ENCODE measurements at regions of chr19 and their contacts with region 1.

Region 1: DNA sequence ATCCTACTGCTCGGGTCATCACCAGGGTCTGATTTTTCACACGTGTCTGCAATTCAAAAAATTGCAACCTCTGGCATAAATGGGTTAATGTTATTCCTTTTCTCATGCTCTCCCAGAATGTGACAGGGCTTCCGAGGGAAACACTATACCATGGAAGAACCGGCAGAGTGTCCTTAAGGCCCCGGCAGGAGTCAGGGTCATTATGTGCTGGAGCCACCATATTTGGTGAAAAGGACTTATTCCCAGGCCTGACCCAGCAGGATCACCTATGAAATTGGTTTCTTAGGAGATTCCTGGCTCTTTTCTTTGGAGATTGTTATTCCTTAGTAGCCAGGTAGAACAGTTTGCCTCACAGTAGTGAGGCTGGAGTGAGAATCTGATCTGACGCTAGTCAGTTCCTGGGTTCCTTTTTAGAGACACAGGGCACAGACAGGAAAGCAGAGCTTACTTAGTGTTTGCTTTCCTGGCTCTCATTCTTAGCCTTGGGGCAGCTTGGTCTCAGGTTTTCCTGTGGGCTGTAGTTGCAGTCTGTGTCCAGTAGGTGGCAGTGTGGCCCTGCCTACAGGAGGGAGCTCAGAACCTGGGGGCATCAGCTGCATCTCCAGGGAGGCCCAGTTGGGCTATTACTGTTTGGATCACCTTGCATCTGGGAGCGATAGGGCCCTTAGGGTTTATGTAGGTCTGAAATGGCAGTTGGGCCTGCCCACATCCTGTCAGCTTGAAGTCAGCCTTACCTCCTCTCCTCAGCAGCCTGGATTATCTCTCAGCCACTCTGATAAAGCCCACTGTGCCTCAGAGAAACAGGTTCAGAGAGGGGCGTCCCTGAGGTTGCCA is 12.4 kb downstream of the SNRNP70 start:
- DNase-seq: peak; percentile 66 to 90
- H3K4me3 ChIP-seq: no peak overlapping the region
- H3K27ac ChIP-seq: peak overlapping the region; percentile 21; the same call in 1 of the 2 replicates
- H3K4me1 ChIP-seq: no peaks in the 10 kb centered on the region
- H3K27me3 ChIP-seq: no peaks in the 10 kb centered on the region
- CTCF ChIP-seq: peak; percentile 95 to 99 (median 98)
- EP300 ChIP-seq: no peak
- POLR2A ChIP-seq: peak in 1 of 2 experiments; percentile 54; a peak in 2 of 3 replicates
- RAD21 ChIP-seq: peak; percentile 88 to 95

Region 2: DNA sequence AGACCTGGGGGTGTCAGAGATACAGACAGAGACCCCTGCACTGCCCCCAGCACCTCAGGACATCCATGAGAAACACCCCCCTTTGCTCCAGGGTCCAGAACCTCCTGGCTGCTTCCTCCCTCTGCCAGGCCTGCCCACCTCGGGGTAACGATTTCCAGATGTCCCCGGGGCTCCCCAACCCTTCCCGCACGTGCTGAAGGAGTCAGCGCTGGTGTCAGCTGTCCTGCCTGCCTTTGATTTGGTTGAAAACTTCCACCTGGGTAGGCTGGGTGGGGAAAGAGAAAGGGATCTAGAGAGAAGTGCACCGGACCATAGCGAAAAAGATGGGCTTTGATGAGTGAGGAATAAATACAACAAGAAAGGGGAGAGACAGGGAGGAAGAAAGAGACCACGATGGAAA is 38.6 kb before region 1 on chr19:
- CTCF ChIA-PET with region 1: no interaction called
- POLR2A ChIA-PET with region 1: no interaction called
- DNase-seq: no peak
- H3K4me3 ChIP-seq: no peak overlapping the region
- H3K27ac ChIP-seq: no peak overlapping the region
- H3K4me1 ChIP-seq: peaks cover 0 to 14% (median 12%) of the 10 kb centered on the region in 4 experiments; a peak in 6 of 7 replicates
- H3K27me3 ChIP-seq: peaks cover 10 to 48% (median 44%) of the 10 kb centered on the region in 4 experiments
- CTCF ChIP-seq: no peak
- EP300 ChIP-seq: no peak
- POLR2A ChIP-seq: no peak
- RAD21 ChIP-seq: no peak

Region 3: DNA sequence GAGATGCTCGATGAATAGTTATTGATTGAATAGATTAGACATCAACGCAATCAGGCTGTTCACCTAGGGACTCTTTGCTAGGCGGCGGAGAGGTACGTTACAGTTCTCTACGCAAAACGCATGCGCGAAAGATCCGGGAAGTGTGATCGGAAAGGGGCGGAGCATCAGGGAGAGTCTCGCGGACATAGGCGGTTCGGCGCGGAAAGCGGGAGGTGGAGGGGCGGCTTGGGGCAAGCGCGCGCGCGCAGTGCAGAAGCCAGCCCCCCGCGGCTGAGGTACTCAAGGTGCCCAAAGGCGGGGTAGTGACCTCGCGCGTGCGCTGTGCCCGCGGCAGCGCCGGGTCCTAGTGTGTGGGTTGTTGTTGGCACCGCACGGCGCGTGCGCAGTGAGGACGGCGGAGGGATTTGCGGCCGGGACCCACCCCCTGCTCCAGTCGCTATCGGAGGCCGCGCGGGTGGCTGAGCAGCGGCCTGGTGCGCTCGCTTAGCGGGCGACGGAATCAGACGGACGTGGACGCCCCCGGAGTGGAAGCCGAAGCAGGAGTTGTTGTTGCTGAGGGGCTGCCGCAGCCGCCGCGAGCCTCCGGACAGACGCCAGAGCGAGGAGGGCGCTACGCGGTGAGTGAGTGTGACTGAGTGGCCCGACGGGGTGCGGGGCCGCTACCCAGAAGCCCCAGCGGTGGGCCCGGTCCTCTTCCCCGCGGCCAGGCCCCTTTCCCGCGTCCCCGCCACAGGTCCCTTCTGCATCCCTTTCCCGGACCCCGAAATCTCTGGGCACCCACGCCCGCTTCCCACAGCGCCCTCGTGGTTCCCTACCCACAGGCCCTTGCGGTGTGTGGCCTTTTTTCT is 12.4 kb before region 1 on chr19 and contains the start of gene SNRNP70:
- CTCF ChIA-PET with region 1: interaction called, 16 read pairs
- POLR2A ChIA-PET with region 1: interaction called, 10 read pairs
- DNase-seq: peak; percentile 98 to 99
- H3K4me3 ChIP-seq: peak within 1 kb of the TSS; percentile 84 to 97 (median 90)
- H3K27ac ChIP-seq: peak within 1 kb of the TSS; percentile 94
- H3K4me1 ChIP-seq: peaks cover 4 to 6% (median 5%) of the 10 kb centered on the region in 4 experiments
- H3K27me3 ChIP-seq: peaks cover 0 to 3% (median 0%) of the 10 kb centered on the region in 4 experiments; a peak in 1 of 7 replicates
- CTCF ChIP-seq: 0 out of 4 replicates have a peak, but pooled peaks of 1 of the 3 experiments have one; percentile 3
- EP300 ChIP-seq: no peak; a peak in 1 of 3 replicates
- POLR2A ChIP-seq: peak; percentile 97 to 98
- RAD21 ChIP-seq: no peak
- total RNA-seq, gene SNRNP70: 231 and 244 TPM in 2 replicates

Region 4: DNA sequence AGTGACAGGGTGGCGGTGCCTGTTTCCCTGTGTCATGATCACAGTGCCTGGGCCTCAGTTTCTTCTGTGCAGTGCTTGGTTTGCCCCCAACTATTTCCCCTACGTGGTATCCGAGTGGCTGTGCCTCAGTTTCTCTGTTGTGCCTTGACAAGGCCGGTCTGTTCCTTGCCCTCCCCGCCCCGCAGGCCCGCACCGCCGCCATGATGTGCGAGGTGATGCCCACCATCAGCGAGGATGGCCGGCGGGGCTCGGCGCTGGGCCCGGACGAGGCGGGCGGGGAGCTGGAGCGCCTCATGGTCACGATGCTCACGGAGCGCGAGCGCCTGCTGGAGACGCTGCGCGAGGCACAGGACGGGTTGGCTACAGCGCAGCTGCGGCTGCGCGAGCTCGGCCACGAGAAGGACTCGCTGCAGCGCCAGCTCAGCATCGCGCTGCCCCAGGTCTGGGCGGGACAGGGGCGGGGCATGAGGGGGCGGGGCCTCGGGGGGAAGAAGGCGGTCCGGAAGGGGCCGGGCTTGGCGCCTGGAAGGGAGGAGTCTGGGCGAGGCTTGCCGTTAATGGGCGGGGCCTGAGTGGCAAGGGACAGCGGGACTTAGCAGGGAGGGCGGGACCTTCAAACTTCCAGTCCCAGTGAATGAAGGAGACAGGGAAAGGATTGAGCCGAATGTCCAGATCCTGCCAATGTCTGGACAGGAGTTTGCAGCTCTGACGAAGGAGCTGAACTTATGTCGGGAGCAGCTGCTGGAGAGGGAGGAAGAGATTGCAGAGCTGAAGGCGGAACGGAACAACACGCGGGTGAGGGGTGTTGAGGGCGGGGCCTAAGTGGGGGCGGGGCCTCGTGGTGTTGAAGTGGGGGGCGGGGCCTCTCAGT is 30.2 kb after region 1 on chr19:
- CTCF ChIA-PET with region 1: interaction called, 14 read pairs
- POLR2A ChIA-PET with region 1: no interaction called
- DNase-seq: peak in 1 of 2 experiments; percentile 97
- H3K4me3 ChIP-seq: peak overlapping the region; percentile 56 to 74 (median 66)
- H3K27ac ChIP-seq: peak overlapping the region; percentile 48; the same call in 1 of the 2 replicates
- H3K4me1 ChIP-seq: peaks cover 4 to 19% (median 8%) of the 10 kb centered on the region in 4 experiments
- H3K27me3 ChIP-seq: no peaks in the 10 kb centered on the region; a peak in 2 of 7 replicates
- CTCF ChIP-seq: peak in 1 of 3 experiments; percentile 1; a peak in 1 of 4 replicates
- EP300 ChIP-seq: no peak
- POLR2A ChIP-seq: peak in 1 of 2 experiments; percentile 69; a peak in 2 of 3 replicates
- RAD21 ChIP-seq: no peak

Region 5: DNA sequence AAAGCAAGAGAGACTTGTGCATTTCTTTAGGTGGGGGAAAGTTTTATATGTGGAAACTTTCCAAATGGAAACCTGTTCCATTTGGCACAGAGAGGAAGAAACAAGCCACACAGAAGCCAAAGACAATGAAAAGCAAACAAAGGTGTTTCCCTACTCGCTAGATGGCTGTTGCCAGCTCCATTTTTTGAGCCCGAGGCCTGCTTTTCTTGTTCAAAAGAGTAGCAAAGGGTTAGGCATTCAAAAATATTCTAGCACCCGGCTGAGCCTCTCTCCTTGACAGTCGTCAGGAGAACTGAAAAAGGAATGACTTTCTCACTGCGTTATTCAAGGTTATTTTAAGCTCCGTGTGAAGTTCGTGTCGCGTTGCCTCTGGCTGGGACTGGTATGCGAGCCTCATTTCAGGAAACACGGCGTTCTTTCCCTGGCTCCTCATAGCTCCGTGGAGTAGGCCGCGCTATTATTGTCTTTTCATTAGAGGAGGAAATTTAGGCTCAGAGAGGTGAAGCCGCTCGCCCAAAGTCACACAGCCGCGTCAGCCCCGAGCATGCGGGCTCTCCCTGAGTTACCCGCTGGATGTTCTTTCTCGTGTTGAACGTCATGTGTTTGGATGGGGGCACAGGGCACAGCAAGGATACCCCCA is 67.6 kb after region 1 on chr19:
- CTCF ChIA-PET with region 1: interaction called, 15 read pairs
- POLR2A ChIA-PET with region 1: interaction called, 4 read pairs
- DNase-seq: no peak
- H3K4me3 ChIP-seq: peak overlapping the region in 3 of 4 experiments; percentile 42 to 62 (median 45); a peak in 5 of 8 replicates
- H3K27ac ChIP-seq: no peak overlapping the region
- H3K4me1 ChIP-seq: peaks cover 0 to 12% (median 8%) of the 10 kb centered on the region in 4 experiments; a peak in 6 of 7 replicates
- H3K27me3 ChIP-seq: peaks cover 0 to 5% (median 2%) of the 10 kb centered on the region in 4 experiments; a peak in 3 of 7 replicates
- CTCF ChIP-seq: no peak
- EP300 ChIP-seq: no peak
- POLR2A ChIP-seq: no peak
- RAD21 ChIP-seq: no peak

Region 6: DNA sequence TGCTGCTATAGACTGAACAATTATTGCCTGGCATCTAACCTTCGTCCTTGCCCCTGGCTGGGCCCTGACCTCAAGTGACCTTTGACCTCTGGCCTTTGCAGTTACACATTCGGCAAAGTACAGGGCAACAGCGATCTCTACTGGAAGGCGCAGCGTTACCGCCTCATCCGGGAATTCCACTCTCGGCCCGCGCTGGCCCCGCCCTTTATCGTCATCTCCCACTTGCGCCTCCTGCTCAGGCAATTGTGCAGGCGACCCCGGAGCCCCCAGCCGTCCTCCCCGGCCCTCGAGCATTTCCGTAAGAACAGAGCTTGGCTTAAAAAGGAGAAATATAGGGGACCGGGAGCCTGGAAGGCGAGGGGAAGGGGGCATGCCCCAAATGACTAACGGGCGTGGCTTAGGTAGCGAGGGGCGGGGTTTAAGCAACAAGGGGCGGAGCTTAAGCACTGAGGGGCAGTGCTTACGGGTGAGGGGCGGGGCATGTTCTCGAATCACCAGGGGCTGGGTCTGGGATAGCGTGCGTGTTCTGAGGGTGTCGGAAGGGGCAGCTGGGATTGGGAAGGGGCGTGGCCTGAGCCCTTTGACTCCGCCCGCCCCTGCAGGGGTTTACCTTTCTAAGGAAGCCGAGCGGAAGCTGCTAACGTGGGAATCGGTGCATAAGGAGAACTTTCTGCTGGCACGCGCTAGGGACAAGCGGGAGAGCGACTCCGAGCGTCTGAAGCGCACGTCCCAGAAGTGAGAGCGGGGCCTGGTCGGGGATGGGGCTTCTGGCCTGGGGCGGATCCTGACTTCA is 112.6 kb after region 1 on chr19:
- CTCF ChIA-PET with region 1: interaction called, 21 read pairs
- POLR2A ChIA-PET with region 1: interaction called, 3 read pairs
- DNase-seq: peak; percentile 91 to 97
- H3K4me3 ChIP-seq: peak overlapping the region; percentile 32 to 61 (median 44)
- H3K27ac ChIP-seq: peak overlapping the region; percentile 40; the same call in 1 of the 2 replicates
- H3K4me1 ChIP-seq: peaks cover 0 to 7% (median 3%) of the 10 kb centered on the region in 4 experiments; a peak in 5 of 7 replicates
- H3K27me3 ChIP-seq: no peaks in the 10 kb centered on the region
- CTCF ChIP-seq: peak; percentile 73 to 75 (median 75)
- EP300 ChIP-seq: no peak
- POLR2A ChIP-seq: no peak
- RAD21 ChIP-seq: peak; percentile 78 to 81

Region 7: DNA sequence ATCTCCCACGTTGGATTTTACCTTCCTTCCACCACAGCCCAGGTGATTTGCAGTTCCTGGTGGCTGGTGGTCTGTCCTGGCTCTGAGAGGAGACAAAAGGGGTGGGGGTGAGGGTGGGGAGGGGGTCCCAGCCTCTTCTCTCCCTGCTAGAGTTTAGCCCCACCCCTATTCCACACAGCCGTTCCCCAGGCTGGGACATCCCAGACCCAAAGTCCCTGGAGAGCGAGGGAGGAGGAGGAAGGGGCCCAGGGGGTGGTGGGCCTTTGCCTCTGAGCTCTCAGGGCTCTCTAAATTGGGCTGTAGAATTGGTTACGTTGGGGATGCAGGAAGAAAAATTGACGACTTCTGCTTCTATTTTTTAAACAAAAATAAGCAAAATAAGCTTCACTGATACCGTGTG is 145.5 kb after region 1 on chr19:
- CTCF ChIA-PET with region 1: no interaction called
- POLR2A ChIA-PET with region 1: no interaction called
- DNase-seq: no peak
- H3K4me3 ChIP-seq: no peak overlapping the region
- H3K27ac ChIP-seq: no peak overlapping the region
- H3K4me1 ChIP-seq: peaks cover 0 to 3% (median 1%) of the 10 kb centered on the region in 4 experiments; a peak in 2 of 7 replicates
- H3K27me3 ChIP-seq: no peaks in the 10 kb centered on the region
- CTCF ChIP-seq: no peak
- EP300 ChIP-seq: no peak
- POLR2A ChIP-seq: no peak
- RAD21 ChIP-seq: no peak

Region 8: GRCh38 chr19:49264258-49264657 is 166.6 kb after region 1 on chr19:
- CTCF ChIA-PET with region 1: no interaction called
- POLR2A ChIA-PET with region 1: no interaction called
- DNase-seq: no peak
- H3K4me3 ChIP-seq: no peak overlapping the region
- H3K27ac ChIP-seq: no peak overlapping the region
- H3K4me1 ChIP-seq: no peaks in the 10 kb centered on the region
- H3K27me3 ChIP-seq: no peaks in the 10 kb centered on the region
- CTCF ChIP-seq: no peak
- EP300 ChIP-seq: no peak
- POLR2A ChIP-seq: no peak
- RAD21 ChIP-seq: no peak

Measured in H1 (cell line).